Dorsolateral prefrontal cortex (tissue), 120 donors: ENCODE measurements at regions of chr11 and their contacts with region 1.

Region 1: GRCh38 chr11:1916986-1917670 is 2.4 kb upstream of the TNNT3 start:
- DNase-seq: no peak
- H3K4me3 ChIP-seq: no peak overlapping the region
- H3K27ac ChIP-seq: no peak overlapping the region
- H3K27me3 ChIP-seq: no peaks in the 10 kb centered on the region
- CTCF ChIP-seq: no peak

Region 2: GRCh38 chr11:1892116-1892515 is 25.0 kb before region 1 on chr11:
- intact Hi-C with region 1: loop called (anchors 1 kb)
- DNase-seq: no peak
- H3K4me3 ChIP-seq: no peak overlapping the region
- H3K27ac ChIP-seq: no peak overlapping the region
- H3K27me3 ChIP-seq: peaks cover 0 to 3% (median 0%) of the 10 kb centered on the region in 45 donors
- CTCF ChIP-seq: no peak

Region 3: GRCh38 chr11:1938343-1939005 is 21.3 kb after region 1 on chr11:
- intact Hi-C with region 1: loop called (anchors 1 kb)
- DNase-seq: peak in 2 of 10 donors; percentile 29 to 32
- H3K4me3 ChIP-seq: no peak overlapping the region
- H3K27ac ChIP-seq: no peak overlapping the region
- H3K27me3 ChIP-seq: peaks cover 0 to 15% (median 0%) of the 10 kb centered on the region in 45 donors
- CTCF ChIP-seq: no peak

Region 4: GRCh38 chr11:1943977-1944376 is 26.8 kb after region 1 on chr11:
- intact Hi-C with region 1: loop called in 1 of 2 experiments (anchors 1 kb)
- DNase-seq: no peak
- H3K4me3 ChIP-seq: no peak overlapping the region
- H3K27ac ChIP-seq: no peak overlapping the region
- H3K27me3 ChIP-seq: peaks cover 0 to under 1% (median 0%) of the 10 kb centered on the region in 45 donors
- CTCF ChIP-seq: no peak

Region 5: GRCh38 chr11:1970956-1971355 is 53.8 kb after region 1 on chr11:
- intact Hi-C with region 1: no loop called
- DNase-seq: peak in 1 of 10 donors; percentile 2
- H3K4me3 ChIP-seq: no peak overlapping the region
- H3K27ac ChIP-seq: no peak overlapping the region
- H3K27me3 ChIP-seq: no peaks in the 10 kb centered on the region
- CTCF ChIP-seq: no peak